ENCODE measurements at regions of chr1 and their contacts with region 1.

Region 1: DNA sequence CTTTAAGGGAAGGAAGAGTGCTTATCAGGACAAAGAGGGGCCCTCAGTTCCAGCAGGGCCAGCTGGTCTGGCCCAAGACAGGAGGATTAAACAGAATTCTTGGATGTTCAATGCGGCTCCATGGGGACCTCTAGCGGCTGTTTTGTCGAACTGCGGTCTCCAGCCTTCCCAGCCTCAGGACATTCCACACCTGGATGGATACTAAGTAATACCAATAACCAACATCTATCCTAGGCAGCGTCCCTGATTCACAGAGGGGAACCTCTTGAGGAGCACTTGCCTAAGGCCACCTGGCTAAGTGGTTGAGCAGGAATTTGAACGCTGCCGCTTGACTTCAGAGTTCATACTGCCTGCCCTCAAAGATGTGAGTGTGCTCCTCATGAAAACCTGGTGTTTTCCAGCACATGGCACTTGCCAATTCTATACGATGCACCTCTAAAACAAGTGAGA is 15.5 kb upstream of the CD247 start:
- DNase-seq: peak; percentile 68
- H3K4me3 Mint-ChIP-seq: no peak overlapping the region
- H3K27ac Mint-ChIP-seq: no peak overlapping the region
- H3K4me1 Mint-ChIP-seq: peaks cover 7% of the 10 kb centered on the region
- H3K27me3 Mint-ChIP-seq: no peaks in the 10 kb centered on the region

Region 2: GRCh38 chr1:167263819-167264464 is 269.9 kb before region 1 on chr1:
- CTCF ChIA-PET with region 1: interaction called, 33 read pairs
- POLR2A ChIA-PET with region 1: no interaction called
- DNase-seq: no peak
- H3K4me3 Mint-ChIP-seq: no peak overlapping the region
- H3K27ac Mint-ChIP-seq: no peak overlapping the region
- H3K4me1 Mint-ChIP-seq: peaks cover 20% of the 10 kb centered on the region
- H3K27me3 Mint-ChIP-seq: no peaks in the 10 kb centered on the region

Region 3: DNA sequence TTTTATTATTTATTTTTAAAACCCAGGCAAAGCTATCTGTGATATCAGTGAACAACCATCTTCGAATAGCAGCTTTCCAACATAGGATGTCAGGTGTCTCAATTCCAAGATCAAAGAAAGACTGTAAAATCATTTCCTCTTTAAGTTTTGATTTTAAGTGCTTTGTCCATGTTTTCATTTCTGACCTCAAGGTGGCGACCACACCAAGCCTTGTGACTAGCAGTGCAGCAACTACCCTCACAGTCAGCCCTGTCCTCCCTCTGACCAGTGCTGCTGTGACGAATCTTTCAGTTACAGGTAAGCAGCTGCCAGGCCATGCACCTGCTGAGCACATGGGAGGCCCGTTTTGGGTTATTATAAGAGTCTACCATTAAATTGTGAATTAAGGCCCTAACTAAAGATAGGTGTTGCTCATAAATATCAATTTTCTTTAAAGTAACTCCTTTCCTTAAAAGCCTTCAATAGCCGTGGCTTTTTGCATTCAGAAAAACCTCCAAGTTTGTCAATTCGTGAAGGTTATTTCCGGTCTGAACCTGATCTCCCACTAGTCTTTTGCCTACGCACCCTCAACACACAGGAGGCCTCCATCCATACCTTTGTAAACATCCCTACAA is 132.5 kb before region 1 on chr1:
- CTCF ChIA-PET with region 1: interaction called, 57 read pairs
- POLR2A ChIA-PET with region 1: no interaction called
- DNase-seq: peak; percentile 57
- H3K4me3 Mint-ChIP-seq: no peak overlapping the region
- H3K27ac Mint-ChIP-seq: no peak overlapping the region
- H3K4me1 Mint-ChIP-seq: no peaks in the 10 kb centered on the region
- H3K27me3 Mint-ChIP-seq: no peaks in the 10 kb centered on the region

Region 4: GRCh38 chr1:167442124-167442848 is 91.6 kb before region 1 on chr1:
- CTCF ChIA-PET with region 1: interaction called, 34 read pairs
- POLR2A ChIA-PET with region 1: interaction called, 11 read pairs
- DNase-seq: peak; percentile 90
- H3K4me3 Mint-ChIP-seq: no peak overlapping the region
- H3K27ac Mint-ChIP-seq: peak overlapping the region; percentile 44
- H3K4me1 Mint-ChIP-seq: peaks cover 86% of the 10 kb centered on the region
- H3K27me3 Mint-ChIP-seq: no peaks in the 10 kb centered on the region

Region 5: DNA sequence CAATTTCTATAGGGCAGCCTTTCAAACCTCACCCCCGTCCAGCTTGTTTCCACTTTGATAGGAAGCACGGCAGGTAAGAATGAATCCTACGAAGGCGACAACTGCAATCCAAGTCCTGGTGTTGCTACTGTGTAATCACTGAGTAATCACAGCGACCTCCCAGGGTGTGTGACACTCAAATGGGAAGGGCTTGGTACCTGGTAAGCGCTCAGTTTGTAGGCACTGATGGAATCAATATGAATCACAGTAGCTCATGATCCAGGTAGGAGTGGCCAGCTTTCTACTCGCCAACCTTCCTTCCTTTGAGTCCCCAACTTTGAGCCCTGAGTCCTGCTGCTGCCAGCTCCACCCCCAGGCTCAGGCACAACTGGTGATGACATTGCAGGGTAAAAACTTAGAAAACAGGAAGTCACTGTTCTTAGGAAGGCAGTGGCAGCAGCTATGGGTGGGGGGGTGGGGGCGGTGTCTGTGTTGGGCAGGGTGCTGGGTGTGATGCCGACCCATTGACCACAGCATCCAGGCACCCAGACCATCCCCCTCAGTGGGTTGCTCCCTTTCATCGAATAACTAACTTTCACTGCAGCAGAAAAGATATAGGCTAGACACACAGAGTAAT is 86.2 kb before region 1 on chr1:
- CTCF ChIA-PET with region 1: interaction called, 34 read pairs
- POLR2A ChIA-PET with region 1: interaction called, 11 read pairs
- DNase-seq: peak; percentile 84
- H3K4me3 Mint-ChIP-seq: peak overlapping the region; percentile 28
- H3K27ac Mint-ChIP-seq: peak overlapping the region; percentile 97
- H3K4me1 Mint-ChIP-seq: peaks cover 85% of the 10 kb centered on the region
- H3K27me3 Mint-ChIP-seq: no peaks in the 10 kb centered on the region

Region 6: DNA sequence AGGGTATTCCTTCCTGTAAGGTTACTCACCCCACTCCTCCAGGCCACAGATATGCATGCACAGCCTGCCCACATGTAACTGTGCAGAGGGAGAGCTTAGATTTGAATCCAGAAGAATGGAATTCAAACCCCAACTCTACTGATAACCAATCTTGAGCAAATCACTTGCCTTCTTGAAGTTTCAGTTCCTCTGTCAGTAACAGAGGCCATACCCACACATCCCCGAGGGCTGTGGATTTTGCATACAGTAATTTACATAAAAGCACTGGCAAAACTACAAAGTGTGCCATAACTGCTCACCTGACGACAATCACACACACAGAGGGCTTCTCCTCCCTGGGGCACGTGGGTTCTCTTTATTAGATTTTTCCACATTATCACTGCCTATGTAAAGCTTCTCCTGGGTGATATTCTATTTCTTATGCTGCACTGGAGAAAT is 34.2 kb before region 1 on chr1:
- CTCF ChIA-PET with region 1: interaction called, 18 read pairs
- POLR2A ChIA-PET with region 1: no interaction called
- DNase-seq: peak; percentile 41
- H3K4me3 Mint-ChIP-seq: peak overlapping the region; percentile 5
- H3K27ac Mint-ChIP-seq: peak overlapping the region; percentile 86
- H3K4me1 Mint-ChIP-seq: peaks cover 96% of the 10 kb centered on the region
- H3K27me3 Mint-ChIP-seq: no peaks in the 10 kb centered on the region

Measured in activated CD4-positive, alpha-beta memory T cell treated with anti-CD3 and anti-CD28 coated beads, Interleukin-2, amount 10 ng/mL, durations not matched to agents 7 days and 5 days (primary cell).